Gastrocnemius medialis (tissue), 4 donors: ENCODE measurements at regions of chr5 and their contacts with region 1.

Region 1: DNA sequence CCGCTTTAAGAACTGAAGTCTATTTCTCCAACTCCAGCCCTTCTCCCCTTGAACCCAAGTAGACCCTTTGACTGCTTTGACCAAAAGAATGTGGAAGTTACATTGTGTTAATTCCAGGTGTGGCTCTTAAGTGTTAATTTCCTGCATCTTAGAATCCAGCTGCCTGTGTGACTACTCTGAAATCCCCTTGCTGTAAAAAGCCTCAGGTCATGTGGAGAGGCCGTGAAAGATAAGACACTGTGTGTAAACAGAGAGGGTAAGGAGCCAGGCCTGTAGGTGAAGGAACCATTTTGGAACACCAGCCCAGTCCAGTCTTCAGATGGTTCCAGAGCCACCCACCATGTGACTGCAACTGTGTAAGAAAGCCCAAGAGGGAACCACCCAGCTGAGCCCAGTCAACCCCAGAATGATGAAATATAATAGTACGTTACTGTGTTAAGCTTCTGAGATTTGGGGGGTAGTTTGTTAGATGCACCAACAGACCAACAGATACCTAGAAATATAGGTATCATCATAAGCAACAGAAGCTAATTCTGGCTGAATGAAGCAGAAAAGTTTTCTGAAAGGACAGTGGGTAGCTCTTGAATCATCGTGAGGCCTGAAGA is 59.4 kb upstream of the CCDC112 start:
- DNase-seq: no peak
- ATAC-seq: no peak
- H3K4me3 ChIP-seq: no peak overlapping the region
- H3K27ac ChIP-seq: no peak overlapping the region
- H3K4me1 ChIP-seq: no peaks in the 10 kb centered on the region
- H3K27me3 ChIP-seq: no peaks in the 10 kb centered on the region
- CTCF ChIP-seq: no peak
- POLR2A ChIP-seq: no peak

Region 2: GRCh38 chr5:114346181-114346580 is 1009.7 kb before region 1 on chr5:
- in situ Hi-C with region 1: no loop called
- intact Hi-C with region 1: no loop called
- DNase-seq: no peak
- ATAC-seq: no peak
- H3K4me3 ChIP-seq: no peak overlapping the region
- H3K27ac ChIP-seq: no peak overlapping the region
- H3K4me1 ChIP-seq: no peaks in the 10 kb centered on the region
- H3K27me3 ChIP-seq: no peaks in the 10 kb centered on the region
- CTCF ChIP-seq: no peak
- POLR2A ChIP-seq: no peak

Region 3: DNA sequence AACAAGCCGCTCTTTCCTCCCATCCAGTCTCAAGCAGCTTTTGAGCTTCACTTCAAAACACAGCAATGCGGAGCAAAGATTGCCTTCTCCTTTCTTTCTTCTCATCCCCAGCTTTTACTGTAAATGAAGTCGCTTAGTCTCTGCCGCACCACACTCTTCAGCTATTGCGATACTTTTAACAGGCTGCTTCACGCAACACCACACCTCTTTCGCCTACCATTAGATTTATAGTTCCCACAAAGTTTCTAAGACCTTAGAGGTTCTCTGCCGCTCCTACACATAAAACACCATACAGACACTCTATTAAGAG is 93.9 kb before region 1 on chr5:
- in situ Hi-C with region 1: no loop called
- intact Hi-C with region 1: no loop called
- DNase-seq: no peak
- ATAC-seq: peak; percentile 10 to 17
- H3K4me3 ChIP-seq: peak overlapping the region; percentile 61 to 100 (median 82)
- H3K27ac ChIP-seq: peak overlapping the region; percentile 76 to 88 (median 84)
- H3K4me1 ChIP-seq: peaks cover 17 to 18% of the 10 kb centered on the region in 2 donors
- H3K27me3 ChIP-seq: no peaks in the 10 kb centered on the region
- CTCF ChIP-seq: no peak
- POLR2A ChIP-seq: no peak

Region 4: DNA sequence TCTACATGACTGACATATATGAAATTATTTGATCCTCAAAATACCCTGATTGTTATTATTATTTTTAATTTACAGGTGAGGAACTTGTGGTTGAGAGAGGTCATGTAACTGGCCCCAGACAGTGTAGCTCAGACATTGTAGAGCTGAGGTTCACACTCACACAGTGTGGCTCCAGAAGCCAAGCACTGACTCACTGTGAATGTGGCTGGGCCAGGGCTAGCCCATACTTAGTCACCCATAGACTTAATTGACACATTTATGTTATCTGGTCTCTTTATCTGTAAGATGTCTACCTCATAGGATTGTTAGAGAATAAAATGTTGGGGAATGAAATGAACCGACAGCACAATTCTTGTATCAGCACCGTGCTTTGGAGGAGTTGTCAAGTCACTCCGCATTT is 34.6 kb before region 1 on chr5:
- in situ Hi-C with region 1: no loop called
- intact Hi-C with region 1: loop called (anchors 5 kb)
- DNase-seq: no peak
- ATAC-seq: no peak
- H3K4me3 ChIP-seq: no peak overlapping the region
- H3K27ac ChIP-seq: no peak overlapping the region
- H3K4me1 ChIP-seq: peaks cover 7 to 10% of the 10 kb centered on the region in 2 donors
- H3K27me3 ChIP-seq: no peaks in the 10 kb centered on the region
- CTCF ChIP-seq: no peak
- POLR2A ChIP-seq: no peak

Region 5: GRCh38 chr5:116002116-116002906 is 646.4 kb after region 1 on chr5:
- in situ Hi-C with region 1: no loop called
- intact Hi-C with region 1: no loop called
- DNase-seq: no peak
- ATAC-seq: no peak
- H3K4me3 ChIP-seq: no peak overlapping the region
- H3K27ac ChIP-seq: no peak overlapping the region
- H3K4me1 ChIP-seq: no peaks in the 10 kb centered on the region
- H3K27me3 ChIP-seq: no peaks in the 10 kb centered on the region
- CTCF ChIP-seq: no peak
- POLR2A ChIP-seq: no peak